Activated CD8-positive, alpha-beta memory T cell treated with anti-CD3 and anti-CD28 coated beads, Interleukin-2, amount 10 ng/mL, durations not matched to agents 7 days and 5 days (primary cell): ENCODE measurements at regions of chr16 and their contacts with region 1.

Region 1: DNA sequence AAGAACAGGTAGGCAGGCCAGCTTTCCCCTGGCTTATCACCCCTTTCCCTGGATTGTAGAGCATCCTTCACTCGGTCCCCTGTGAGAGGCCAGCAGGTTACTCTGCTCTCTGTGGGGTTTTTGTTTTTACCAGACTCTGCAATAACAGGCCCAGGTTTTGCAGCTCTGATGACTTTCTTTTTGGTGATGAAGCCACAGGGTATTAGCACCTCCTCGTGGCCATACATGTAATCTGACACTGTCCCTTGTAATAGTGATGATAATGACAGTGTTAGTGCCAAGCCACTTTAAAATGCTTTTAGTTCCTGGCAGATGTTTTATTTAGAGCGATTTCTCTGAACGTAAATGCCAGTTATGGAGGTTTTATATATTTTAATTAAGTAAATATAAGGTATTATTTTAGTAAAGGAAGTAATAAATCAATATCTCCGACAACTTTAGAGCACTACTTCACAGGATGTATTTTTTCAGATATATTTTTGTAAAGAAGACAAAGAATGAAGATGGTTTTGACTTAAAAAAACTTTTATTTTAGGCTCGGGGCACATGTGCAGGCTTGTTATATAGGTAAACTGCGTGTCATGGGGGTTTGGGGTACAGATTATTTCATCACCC is 38.0 kb upstream of the CPHXL start:
- DNase-seq: peak; percentile 73
- ATAC-seq: peak; percentile 96
- H3K4me3 Mint-ChIP-seq: no peak overlapping the region
- H3K27ac Mint-ChIP-seq: no peak overlapping the region
- H3K4me1 Mint-ChIP-seq: peaks cover 4% of the 10 kb centered on the region
- H3K27me3 Mint-ChIP-seq: peaks cover 2% of the 10 kb centered on the region

Region 2: DNA sequence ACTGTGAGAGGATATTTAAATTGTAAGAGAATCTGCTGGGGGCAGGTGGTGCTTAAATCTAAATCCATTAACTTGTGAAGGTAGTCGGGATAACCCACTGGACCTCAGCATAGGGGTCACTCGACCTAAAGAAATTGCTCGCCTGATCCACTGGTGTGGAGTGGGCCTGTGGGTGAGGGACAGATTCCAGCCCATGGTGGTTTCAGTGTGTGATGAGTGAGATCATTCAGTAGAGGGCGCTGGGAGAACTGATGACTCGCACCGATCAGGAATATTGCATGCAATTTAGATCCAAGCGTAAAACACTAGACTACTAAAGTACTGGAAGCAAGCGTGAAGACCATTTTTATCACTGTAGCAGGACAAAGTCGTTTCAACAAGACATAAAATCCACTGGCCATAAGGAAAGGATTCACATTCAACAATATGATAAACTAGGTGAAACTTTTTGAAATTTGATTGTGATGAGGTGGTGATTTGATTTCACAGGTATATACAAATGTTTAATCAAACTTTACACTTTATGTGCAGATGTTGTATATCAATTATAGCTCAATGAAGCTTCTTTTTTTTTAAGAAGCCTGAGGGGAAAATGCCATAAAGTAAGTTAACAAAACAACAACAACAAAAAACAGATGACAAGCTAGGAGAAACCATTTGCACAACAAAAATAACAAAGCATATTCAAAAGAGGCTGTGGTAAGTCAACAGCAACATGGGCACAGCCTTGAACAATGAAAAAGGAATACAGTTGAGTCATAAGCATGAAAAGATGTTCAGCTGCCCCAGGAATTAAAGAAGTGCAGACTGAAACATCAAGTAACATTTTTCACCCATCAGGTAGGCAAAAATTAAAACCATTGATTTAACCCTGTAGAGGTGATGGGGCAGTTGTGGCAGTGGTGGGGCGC is 292.3 kb before region 1 on chr16:
- CTCF ChIA-PET with region 1: interaction called, 11 read pairs
- DNase-seq: peak; percentile 48
- ATAC-seq: peak; percentile 78
- H3K4me3 Mint-ChIP-seq: no peak overlapping the region
- H3K27ac Mint-ChIP-seq: no peak overlapping the region
- H3K4me1 Mint-ChIP-seq: no peaks in the 10 kb centered on the region
- H3K27me3 Mint-ChIP-seq: no peaks in the 10 kb centered on the region